Heart left ventricle (tissue), 16 donors: ENCODE measurements at regions of chr16 and their contacts with region 1.

Region 1: DNA sequence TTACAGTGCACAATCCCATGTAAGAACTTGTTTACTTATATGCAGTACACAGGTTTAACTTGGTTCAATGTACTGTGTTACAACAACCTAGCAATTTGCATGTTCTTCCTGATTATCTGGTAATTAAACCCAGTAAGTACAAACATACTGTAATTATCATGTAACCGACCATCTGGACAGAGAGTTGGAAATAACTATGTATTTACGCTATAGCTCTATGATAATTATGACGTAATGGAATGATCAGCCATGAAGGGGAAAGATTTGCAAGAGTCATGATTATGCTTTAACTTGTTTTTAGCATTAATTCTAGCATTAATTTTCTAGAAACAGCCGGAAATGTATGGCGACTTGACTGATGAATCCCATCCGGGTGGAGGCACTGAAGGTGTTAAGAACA is 74.8 kb upstream of the SALL1 start:
- DNase-seq: no peak
- ATAC-seq: no peak
- H3K4me3 ChIP-seq: no peak overlapping the region
- H3K27ac ChIP-seq: no peak overlapping the region
- H3K4me1 ChIP-seq: no peaks in the 10 kb centered on the region
- H3K27me3 ChIP-seq: peaks cover 0 to 4% (median 0%) of the 10 kb centered on the region in 9 donors
- CTCF ChIP-seq: no peak
- POLR2A ChIP-seq: no peak

Region 2: DNA sequence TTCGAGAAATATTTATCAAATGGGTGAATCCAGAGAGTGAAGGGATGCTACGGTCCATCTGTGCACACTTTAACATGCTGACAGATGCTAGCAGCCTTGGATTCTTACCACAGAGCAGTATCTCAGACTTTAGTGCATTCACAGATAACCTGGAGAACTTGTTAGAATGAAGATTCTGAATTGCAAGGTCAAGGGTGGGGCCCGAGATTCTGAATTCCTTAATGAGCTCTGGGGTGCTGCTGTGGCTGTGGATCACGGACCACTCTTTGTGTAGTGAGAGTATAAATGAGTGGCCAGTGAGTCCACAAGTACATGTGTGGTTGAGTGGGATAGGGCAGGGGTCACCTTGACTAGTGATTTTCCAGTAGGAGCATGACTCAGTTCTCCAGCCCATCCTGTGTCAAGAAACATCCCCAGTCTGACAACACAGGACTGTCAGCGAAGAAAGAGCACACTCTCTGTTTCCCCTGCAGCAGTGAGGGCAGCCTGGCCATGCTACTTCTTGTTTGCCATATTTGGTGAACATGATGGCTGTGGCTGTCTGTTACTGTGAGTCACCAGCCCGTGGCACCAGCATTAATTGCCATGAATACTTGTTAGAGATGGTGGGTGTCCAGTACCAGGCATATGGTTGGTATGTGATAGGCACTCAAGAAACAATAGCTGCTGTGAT is 61.8 kb before region 1 on chr16:
- intact Hi-C with region 1: loop called in 1 of 10 experiments (anchors 10 kb)
- DNase-seq: no peak
- ATAC-seq: no peak
- H3K4me3 ChIP-seq: no peak overlapping the region
- H3K27ac ChIP-seq: no peak overlapping the region
- H3K4me1 ChIP-seq: no peaks in the 10 kb centered on the region
- H3K27me3 ChIP-seq: peaks cover 0 to 60% (median 6%) of the 10 kb centered on the region in 9 donors
- CTCF ChIP-seq: no peak
- POLR2A ChIP-seq: no peak

Region 3: GRCh38 chr16:51248217-51248616 is 22.3 kb after region 1 on chr16:
- intact Hi-C with region 1: no loop called
- DNase-seq: no peak
- ATAC-seq: no peak
- H3K4me3 ChIP-seq: no peak overlapping the region
- H3K27ac ChIP-seq: no peak overlapping the region
- H3K4me1 ChIP-seq: no peaks in the 10 kb centered on the region
- H3K27me3 ChIP-seq: no peaks in the 10 kb centered on the region
- CTCF ChIP-seq: no peak
- POLR2A ChIP-seq: no peak